ENCODE measurements at regions of chr2 and their contacts with region 1.

Region 1: GRCh38 chr2:55175254-55176025 is 56.7 kb downstream of the CLHC1 start:
- DNase-seq: peak in 2 of 9 experiments; percentile 58 to 70
- ATAC-seq: peak; percentile 91
- H3K4me3 ChIP-seq: no peak overlapping the region
- H3K4me3 Mint-ChIP-seq: no peak overlapping the region
- H3K27ac ChIP-seq: no peak overlapping the region
- H3K27ac Mint-ChIP-seq: no peak overlapping the region
- H3K4me1 ChIP-seq: no peaks in the 10 kb centered on the region
- H3K4me1 Mint-ChIP-seq: peaks cover 3% of the 10 kb centered on the region
- H3K27me3 ChIP-seq: no peaks in the 10 kb centered on the region
- H3K27me3 Mint-ChIP-seq: no peaks in the 10 kb centered on the region
- CTCF ChIP-seq: peak; percentile 67

Region 2: DNA sequence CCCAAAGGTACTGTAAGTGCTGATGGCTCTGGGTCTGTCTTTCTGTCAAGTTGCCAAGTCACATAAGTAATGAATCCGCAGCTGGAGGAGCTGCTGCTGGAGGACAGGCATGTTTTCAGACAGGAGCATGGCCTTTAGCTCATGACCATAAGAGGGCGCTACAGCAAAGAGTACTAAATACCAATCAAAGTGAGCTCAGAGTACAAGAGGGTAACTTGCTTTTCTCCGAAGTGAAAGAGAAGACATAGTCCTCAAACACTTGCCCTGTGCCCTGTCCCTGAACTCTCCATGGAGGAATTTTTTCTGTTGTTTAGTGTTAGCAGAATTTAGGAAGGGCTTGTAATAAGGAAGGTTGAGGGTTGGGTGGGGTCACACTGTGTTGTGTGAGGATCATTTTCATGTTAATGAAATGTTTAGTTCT is 510.0 kb before region 1 on chr2:
- CTCF ChIA-PET with region 1: interaction called, 3 read pairs
- POLR2A ChIA-PET with region 1: no interaction called
- intact Hi-C with region 1: loop called (anchors 2 to 10 kb)
- DNase-seq: peak in 6 of 9 experiments; percentile 7 to 66 (median 39)
- ATAC-seq: peak; percentile 68
- H3K4me3 ChIP-seq: no peak overlapping the region
- H3K4me3 Mint-ChIP-seq: no peak overlapping the region
- H3K27ac ChIP-seq: no peak overlapping the region
- H3K27ac Mint-ChIP-seq: peak overlapping the region; percentile 75
- H3K4me1 ChIP-seq: no peaks in the 10 kb centered on the region
- H3K4me1 Mint-ChIP-seq: peaks cover 3% of the 10 kb centered on the region
- H3K27me3 ChIP-seq: no peaks in the 10 kb centered on the region
- H3K27me3 Mint-ChIP-seq: no peaks in the 10 kb centered on the region
- CTCF ChIP-seq: peak; percentile 68

Region 3: GRCh38 chr2:54838585-54839035 is 336.8 kb before region 1 on chr2:
- CTCF ChIA-PET with region 1: interaction called, 11 read pairs
- POLR2A ChIA-PET with region 1: no interaction called
- intact Hi-C with region 1: loop called in 1 of 2 experiments (anchors 5 kb)
- DNase-seq: peak; percentile 28 to 75 (median 68)
- ATAC-seq: peak; percentile 80
- H3K4me3 ChIP-seq: no peak overlapping the region
- H3K4me3 Mint-ChIP-seq: no peak overlapping the region
- H3K27ac ChIP-seq: no peak overlapping the region
- H3K27ac Mint-ChIP-seq: no peak overlapping the region
- H3K4me1 ChIP-seq: no peaks in the 10 kb centered on the region
- H3K4me1 Mint-ChIP-seq: no peaks in the 10 kb centered on the region
- H3K27me3 ChIP-seq: no peaks in the 10 kb centered on the region
- H3K27me3 Mint-ChIP-seq: no peaks in the 10 kb centered on the region
- CTCF ChIP-seq: peak; percentile 95

Region 4: GRCh38 chr2:55010149-55010591 is 165.3 kb before region 1 on chr2:
- CTCF ChIA-PET with region 1: interaction called, 106 read pairs
- POLR2A ChIA-PET with region 1: no interaction called
- intact Hi-C with region 1: loop called in 1 of 2 experiments (anchors 1 kb)
- DNase-seq: peak; percentile 7 to 79 (median 54)
- ATAC-seq: peak; percentile 95
- H3K4me3 ChIP-seq: peak overlapping the region; percentile 24 to 43
- H3K4me3 Mint-ChIP-seq: peak overlapping the region; percentile 93
- H3K27ac ChIP-seq: peak overlapping the region; percentile 40 to 45
- H3K27ac Mint-ChIP-seq: peak overlapping the region; percentile 95
- H3K4me1 ChIP-seq: peaks cover 61% of the 10 kb centered on the region
- H3K4me1 Mint-ChIP-seq: peaks cover 77% of the 10 kb centered on the region
- H3K27me3 ChIP-seq: no peaks in the 10 kb centered on the region
- H3K27me3 Mint-ChIP-seq: no peaks in the 10 kb centered on the region
- CTCF ChIP-seq: no peak

Region 5: GRCh38 chr2:55111570-55112228 is 63.7 kb before region 1 on chr2:
- CTCF ChIA-PET with region 1: no interaction called
- POLR2A ChIA-PET with region 1: no interaction called
- intact Hi-C with region 1: no loop called
- DNase-seq: peak in 1 of 9 experiments; percentile 29
- ATAC-seq: no peak
- H3K4me3 ChIP-seq: no peak overlapping the region
- H3K4me3 Mint-ChIP-seq: no peak overlapping the region
- H3K27ac ChIP-seq: no peak overlapping the region
- H3K27ac Mint-ChIP-seq: no peak overlapping the region
- H3K4me1 ChIP-seq: no peaks in the 10 kb centered on the region
- H3K4me1 Mint-ChIP-seq: no peaks in the 10 kb centered on the region
- H3K27me3 ChIP-seq: no peaks in the 10 kb centered on the region
- H3K27me3 Mint-ChIP-seq: no peaks in the 10 kb centered on the region
- CTCF ChIP-seq: no peak

Region 6: DNA sequence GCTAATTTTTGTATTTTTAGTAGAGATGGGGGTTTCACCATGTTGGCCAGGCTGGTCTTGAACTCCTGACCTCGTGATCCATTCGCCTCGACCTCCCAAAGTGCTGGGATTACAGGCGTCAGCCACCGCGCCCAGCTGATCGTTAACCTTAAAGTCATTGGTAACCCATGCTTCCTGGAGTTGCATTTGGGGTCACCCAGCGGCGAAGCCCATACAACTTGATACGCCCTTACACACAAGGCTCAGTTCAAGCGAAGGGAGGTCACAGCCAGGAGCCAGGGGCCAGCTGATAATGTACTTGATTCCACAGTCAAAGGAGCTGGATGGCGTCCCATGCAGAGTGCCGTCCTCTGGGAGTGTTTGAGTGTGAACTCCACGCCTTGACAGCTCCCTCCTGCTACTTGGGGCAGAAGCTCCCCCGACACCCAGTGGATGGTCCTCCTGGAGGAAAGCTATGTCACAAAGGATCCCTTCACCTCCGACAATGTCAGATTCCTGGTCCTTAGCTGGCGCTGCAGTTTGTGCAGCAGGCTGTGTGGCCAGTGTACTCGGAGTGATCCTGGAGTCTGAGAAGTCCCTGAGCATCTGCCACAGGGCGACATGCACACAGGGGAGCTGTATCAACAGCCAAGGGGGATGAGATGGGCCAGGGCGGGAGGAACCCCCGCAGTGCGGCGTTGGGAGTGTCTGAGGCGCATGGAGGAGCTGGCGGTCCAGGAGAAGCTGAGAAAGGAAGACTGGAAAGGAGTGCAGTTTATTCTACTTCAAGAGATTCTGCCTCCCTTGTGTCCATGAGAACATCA is 48.7 kb after region 1 on chr2:
- CTCF ChIA-PET with region 1: no interaction called
- POLR2A ChIA-PET with region 1: no interaction called
- intact Hi-C with region 1: loop called in 1 of 2 experiments (anchors 5 kb)
- DNase-seq: peak in 3 of 9 experiments; percentile 5 to 52 (median 34)
- ATAC-seq: no peak
- H3K4me3 ChIP-seq: peak overlapping the region in 1 of 2 experiments; percentile 53
- H3K4me3 Mint-ChIP-seq: peak overlapping the region; percentile 84
- H3K27ac ChIP-seq: peak overlapping the region; percentile 68 to 72
- H3K27ac Mint-ChIP-seq: peak overlapping the region; percentile 91
- H3K4me1 ChIP-seq: peaks cover 28% of the 10 kb centered on the region
- H3K4me1 Mint-ChIP-seq: peaks cover 42% of the 10 kb centered on the region
- H3K27me3 ChIP-seq: no peaks in the 10 kb centered on the region
- H3K27me3 Mint-ChIP-seq: no peaks in the 10 kb centered on the region
- CTCF ChIP-seq: no peak